ENCODE measurements at regions of chr1 and their contacts with region 1.

Region 1: GRCh38 chr1:20786253-20787028 is 666 bp downstream of the HP1BP3 start:
- DNase-seq: peak; percentile 92
- ATAC-seq: peak; percentile 87
- H3K4me3 ChIP-seq: peak overlapping the region; percentile 85
- H3K27ac ChIP-seq: peak overlapping the region; percentile 92
- H3K4me1 ChIP-seq: peaks cover 2% of the 10 kb centered on the region; the same call in 1 of the 2 replicates
- H3K27me3 ChIP-seq: no peaks in the 10 kb centered on the region
- CTCF ChIP-seq: 0 out of 2 replicates have a peak, but pooled peaks have one; percentile 0
- POLR2A ChIP-seq: no peak; the same call in none of the 2 replicates
- RAD21 ChIP-seq: peak; percentile 1; the same call in 1 of the 2 replicates

Region 2: GRCh38 chr1:20770314-20771087 is 15.9 kb before region 1 on chr1:
- CTCF ChIA-PET with region 1: interaction called, 3 read pairs
- POLR2A ChIA-PET with region 1: interaction called, 15 read pairs
- dilution Hi-C with region 1: no loop called
- in situ Hi-C with region 1: no loop called
- intact Hi-C with region 1: no loop called
- DNase-seq: peak; percentile 47
- ATAC-seq: no peak
- H3K4me3 ChIP-seq: no peak overlapping the region
- H3K27ac ChIP-seq: no peak overlapping the region
- H3K4me1 ChIP-seq: no peaks in the 10 kb centered on the region
- H3K27me3 ChIP-seq: no peaks in the 10 kb centered on the region
- CTCF ChIP-seq: no peak
- POLR2A ChIP-seq: no peak
- RAD21 ChIP-seq: no peak

Region 3: GRCh38 chr1:20847611-20848080 is 61.2 kb after region 1 on chr1:
- CTCF ChIA-PET with region 1: no interaction called
- POLR2A ChIA-PET with region 1: no interaction called
- dilution Hi-C with region 1: no loop called
- in situ Hi-C with region 1: no loop called
- intact Hi-C with region 1: no loop called
- DNase-seq: peak; percentile 72
- ATAC-seq: peak; percentile 69
- H3K4me3 ChIP-seq: no peak overlapping the region
- H3K27ac ChIP-seq: no peak overlapping the region
- H3K4me1 ChIP-seq: peaks cover 8% of the 10 kb centered on the region
- H3K27me3 ChIP-seq: no peaks in the 10 kb centered on the region
- CTCF ChIP-seq: no peak
- POLR2A ChIP-seq: no peak
- RAD21 ChIP-seq: no peak

Region 4: GRCh38 chr1:21077085-21077484 is 290.6 kb after region 1 on chr1:
- CTCF ChIA-PET with region 1: no interaction called
- POLR2A ChIA-PET with region 1: no interaction called
- dilution Hi-C with region 1: no loop called
- in situ Hi-C with region 1: no loop called
- intact Hi-C with region 1: loop called (anchors 10 kb)
- DNase-seq: peak; percentile 55
- ATAC-seq: peak; percentile 76
- H3K4me3 ChIP-seq: no peak overlapping the region
- H3K27ac ChIP-seq: no peak overlapping the region
- H3K4me1 ChIP-seq: peaks cover 2% of the 10 kb centered on the region
- H3K27me3 ChIP-seq: no peaks in the 10 kb centered on the region
- CTCF ChIP-seq: no peak
- POLR2A ChIP-seq: no peak
- RAD21 ChIP-seq: no peak